Endothelial cell of umbilical vein (primary cell): ENCODE measurements at regions of chr4 and their contacts with region 1.

Region 1: GRCh38 chr4:53377319-53378170 is at the start of gene FIP1L1:
- DNase-seq: peak; percentile 95
- H3K4me3 ChIP-seq: peak within 1 kb of the TSS; percentile 82 to 90 (median 88)
- H3K27ac ChIP-seq: peak within 1 kb of the TSS; percentile 67
- H3K4me1 ChIP-seq: peaks cover 13% of the 10 kb centered on the region
- H3K27me3 ChIP-seq: peaks cover 0 to 8% of the 10 kb centered on the region in 2 experiments
- CTCF ChIP-seq: no peak
- POLR2A ChIP-seq: peak; percentile 95
- total RNA-seq, gene FIP1L1: 51.9 and 52.1 TPM in 2 replicates

Region 2: DNA sequence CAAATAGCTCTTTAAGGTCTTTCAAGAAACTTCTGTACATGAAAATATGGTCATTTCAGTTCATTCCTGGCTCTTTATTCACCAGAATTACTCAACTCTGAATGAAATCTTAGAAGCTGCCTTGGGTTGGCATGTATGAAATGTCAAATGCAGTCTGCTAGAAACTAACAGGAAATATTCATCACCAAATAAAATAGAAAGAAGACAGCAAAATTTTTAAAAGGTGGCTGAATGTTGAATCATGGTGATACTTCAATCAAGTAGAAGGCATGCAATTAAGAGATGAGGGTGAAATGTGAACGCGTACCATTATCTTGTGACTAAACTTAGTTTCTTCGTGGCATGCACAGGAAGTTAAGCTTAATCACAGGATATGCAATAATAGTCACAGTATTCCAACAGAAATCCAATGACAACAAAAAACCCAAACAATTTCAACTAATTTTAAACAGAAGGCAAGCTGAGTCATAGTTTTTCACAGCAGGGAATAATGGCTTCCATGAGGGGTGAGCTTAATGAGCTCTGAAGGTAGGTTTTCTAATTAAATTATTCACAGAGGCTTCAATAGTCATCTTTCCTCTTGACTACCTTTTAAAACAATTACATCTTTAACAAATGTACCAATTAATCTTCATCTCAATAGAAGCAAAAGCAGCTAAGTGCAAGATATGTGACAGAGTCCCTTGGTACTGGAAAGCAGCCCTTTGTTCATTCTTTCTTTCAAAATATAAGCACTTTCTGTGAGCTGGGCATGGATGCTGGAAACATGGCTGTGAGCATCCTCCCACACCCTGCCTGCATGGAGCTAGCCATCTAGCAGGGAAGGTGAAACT is 56.2 kb before region 1 on chr4:
- CTCF ChIA-PET with region 1: no interaction called
- POLR2A ChIA-PET with region 1: no interaction called
- dilution Hi-C with region 1: no loop called
- intact Hi-C with region 1: loop called (anchors 1 kb)
- DNase-seq: peak; percentile 94
- H3K4me3 ChIP-seq: peak overlapping the region in 1 of 3 experiments; percentile 32
- H3K27ac ChIP-seq: peak overlapping the region; percentile 98
- H3K4me1 ChIP-seq: peaks cover 29% of the 10 kb centered on the region
- H3K27me3 ChIP-seq: no peaks in the 10 kb centered on the region
- CTCF ChIP-seq: no peak
- POLR2A ChIP-seq: peak; percentile 56

Region 3: GRCh38 chr4:53365486-53366300 is 11.9 kb before region 1 on chr4 and contains the start of gene SCFD2:
- CTCF ChIA-PET with region 1: interaction called, 6 read pairs
- POLR2A ChIA-PET with region 1: no interaction called
- dilution Hi-C with region 1: no loop called
- intact Hi-C with region 1: loop called (anchors 1 kb)
- DNase-seq: peak; percentile 96
- H3K4me3 ChIP-seq: peak within 1 kb of the TSS; percentile 49 to 97 (median 74)
- H3K27ac ChIP-seq: peak within 1 kb of the TSS; percentile 7
- H3K4me1 ChIP-seq: peaks cover 17% of the 10 kb centered on the region
- H3K27me3 ChIP-seq: peaks cover 14 to 19% of the 10 kb centered on the region in 2 experiments
- CTCF ChIP-seq: no peak
- POLR2A ChIP-seq: peak; percentile 67
- total RNA-seq, gene SCFD2: 17.6 and 22.8 TPM in 2 replicates